ENCODE measurements at regions of chr1 and their contacts with region 1.

Region 1: GRCh38 chr1:83931658-83932253 is 67.2 kb downstream of the TTLL7 start:
- H3K4me3 ChIP-seq: no peak overlapping the region
- H3K27ac ChIP-seq: no peak overlapping the region
- H3K4me1 ChIP-seq: no peaks in the 10 kb centered on the region
- CTCF ChIP-seq: peak; percentile 43; the same call in 1 of the 2 replicates

Region 2: GRCh38 chr1:84122780-84123382 is 191.1 kb after region 1 on chr1:
- CTCF ChIA-PET with region 1: interaction called, 55 read pairs
- POLR2A ChIA-PET with region 1: no interaction called
- H3K4me3 ChIP-seq: no peak overlapping the region
- H3K27ac ChIP-seq: no peak overlapping the region
- H3K4me1 ChIP-seq: peaks cover 6% of the 10 kb centered on the region; the same call in 1 of the 2 replicates
- CTCF ChIP-seq: no peak; the same call in 1 of the 2 replicates

Region 3: DNA sequence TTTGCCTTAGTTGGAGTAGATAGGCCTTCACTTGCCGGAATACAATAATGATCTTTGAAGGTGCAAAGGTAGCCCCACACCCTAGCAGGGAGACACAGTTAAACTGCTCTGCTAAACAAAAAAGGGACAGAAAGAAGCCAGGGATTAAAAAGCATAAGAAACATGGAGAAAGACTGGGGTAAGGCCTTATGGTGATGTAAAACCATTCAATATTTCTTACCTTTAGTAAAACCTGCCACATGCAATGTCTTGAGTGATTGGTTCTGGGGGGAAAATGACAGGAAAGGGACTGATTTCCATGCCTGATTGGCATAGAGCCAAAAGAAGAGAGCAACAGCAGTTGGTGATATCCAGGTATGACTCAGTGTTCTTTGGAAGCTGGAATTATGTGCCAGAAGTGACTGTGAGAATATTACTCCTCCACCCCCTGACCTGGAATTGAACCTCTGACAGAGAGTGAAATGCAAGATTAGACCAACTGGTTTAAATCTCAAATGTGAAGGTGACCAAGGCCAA is 474.6 kb after region 1 on chr1:
- CTCF ChIA-PET with region 1: no interaction called
- POLR2A ChIA-PET with region 1: no interaction called
- H3K4me3 ChIP-seq: no peak overlapping the region
- H3K27ac ChIP-seq: no peak overlapping the region
- H3K4me1 ChIP-seq: peaks cover 3% of the 10 kb centered on the region; the same call in 1 of the 2 replicates
- CTCF ChIP-seq: no peak

Measured in HEK293 (cell line).